Endothelial cell of umbilical vein (primary cell): ENCODE measurements at regions of chr12 and their contacts with region 1.

Region 1: DNA sequence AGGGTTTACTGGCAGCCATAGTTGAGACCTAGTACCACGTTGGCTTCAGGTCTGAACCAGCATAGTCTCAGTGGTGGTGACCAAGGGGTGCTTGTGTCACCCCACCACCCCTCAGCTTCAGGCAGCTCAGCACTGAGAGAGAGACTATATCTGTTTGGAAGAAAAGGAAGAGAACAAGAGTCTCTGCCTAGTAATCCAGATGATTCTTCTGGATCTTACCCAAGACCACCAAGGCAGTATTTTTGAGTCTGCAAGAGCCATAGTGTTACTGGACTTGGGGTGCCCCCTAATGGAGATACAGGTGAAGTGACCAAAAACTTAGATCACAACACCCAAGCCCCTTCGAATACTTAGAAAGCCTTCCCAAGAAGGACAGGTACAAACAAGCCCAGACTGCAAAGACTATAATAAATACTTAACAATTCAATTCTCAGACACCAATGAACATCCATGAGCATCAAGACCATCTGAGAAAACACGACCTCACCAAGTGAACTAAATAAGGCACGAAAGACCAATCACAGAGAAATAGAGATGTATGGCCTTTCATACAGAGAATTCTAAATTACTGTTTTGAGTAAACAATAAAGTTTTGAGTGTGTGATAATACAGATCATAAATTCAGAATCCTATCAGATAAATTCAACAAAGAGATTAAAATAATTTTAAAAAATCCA is 107.0 kb downstream of the HELB start:
- DNase-seq: peak; percentile 69
- H3K4me3 ChIP-seq: no peak overlapping the region
- H3K27ac ChIP-seq: no peak overlapping the region
- H3K4me1 ChIP-seq: peaks cover 11% of the 10 kb centered on the region
- H3K27me3 ChIP-seq: no peaks in the 10 kb centered on the region
- CTCF ChIP-seq: peak; percentile 58 to 70
- POLR2A ChIP-seq: no peak

Region 2: DNA sequence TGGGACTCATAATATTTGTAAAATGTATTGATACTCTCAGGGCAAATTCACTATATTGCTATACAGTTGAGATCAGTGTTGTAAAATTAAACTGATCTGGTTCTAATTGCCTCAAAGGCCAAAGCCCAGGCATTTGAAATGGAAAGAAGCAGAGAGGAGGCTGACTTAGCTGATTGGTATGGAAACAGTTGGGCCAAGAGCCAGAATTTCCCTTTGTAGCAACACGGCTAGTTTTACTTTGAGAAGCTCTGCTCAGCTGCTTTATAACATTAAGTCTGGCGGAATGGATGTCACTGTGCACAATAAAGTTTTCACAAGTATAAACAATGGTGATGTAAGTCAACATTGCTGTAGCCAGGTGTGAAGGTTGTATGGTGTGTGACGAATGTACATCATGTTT is 944.4 kb before region 1 on chr12:
- CTCF ChIA-PET with region 1: no interaction called
- POLR2A ChIA-PET with region 1: interaction called, 10 read pairs
- dilution Hi-C with region 1: no loop called
- intact Hi-C with region 1: no loop called
- DNase-seq: peak; percentile 18
- H3K4me3 ChIP-seq: no peak overlapping the region
- H3K27ac ChIP-seq: no peak overlapping the region
- H3K4me1 ChIP-seq: no peaks in the 10 kb centered on the region
- H3K27me3 ChIP-seq: no peaks in the 10 kb centered on the region
- CTCF ChIP-seq: no peak
- POLR2A ChIP-seq: no peak

Region 3: DNA sequence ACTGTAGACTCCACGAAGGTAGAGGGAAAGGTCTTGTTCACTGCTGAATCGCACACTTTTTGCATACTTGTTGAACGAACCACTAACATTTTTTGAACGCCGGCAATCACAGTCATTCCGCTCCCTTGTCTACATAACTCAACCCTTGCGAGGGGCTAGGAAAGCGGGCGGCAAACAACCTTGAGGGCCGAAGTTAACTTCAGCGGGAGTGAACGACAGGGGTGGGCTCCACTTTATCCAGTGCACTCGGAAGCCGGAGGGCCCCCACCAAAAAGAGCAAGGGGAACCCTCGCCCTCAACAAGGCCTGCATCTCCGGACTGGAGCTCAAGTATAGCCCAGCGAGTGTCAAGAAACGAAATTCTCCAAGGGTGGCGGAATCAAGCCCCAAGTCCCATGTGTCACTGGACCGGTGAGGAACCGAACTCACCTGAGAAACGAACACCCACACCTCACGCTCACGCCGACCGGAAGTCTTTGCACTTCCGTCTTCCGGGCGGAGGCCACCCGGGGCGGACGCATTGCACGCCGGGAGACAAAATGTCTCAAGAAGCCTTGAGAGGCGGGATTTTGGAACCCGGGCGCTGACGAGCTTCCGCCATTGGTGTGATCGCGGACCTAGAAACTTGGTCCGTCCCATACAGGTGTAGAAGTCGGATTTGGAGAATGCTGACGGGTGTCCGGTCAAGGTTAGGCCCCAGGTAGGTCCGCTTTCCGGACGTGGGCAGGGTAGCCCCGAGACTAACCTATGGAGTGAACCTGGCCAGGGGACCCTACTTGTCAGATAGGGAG is 278.9 kb before region 1 on chr12 and contains the start of gene LLPH:
- CTCF ChIA-PET with region 1: no interaction called
- POLR2A ChIA-PET with region 1: no interaction called
- dilution Hi-C with region 1: no loop called
- intact Hi-C with region 1: loop called (anchors 5 kb)
- DNase-seq: peak; percentile 80
- H3K4me3 ChIP-seq: peak within 1 kb of the TSS; percentile 68 to 85 (median 82)
- H3K27ac ChIP-seq: peak within 1 kb of the TSS; percentile 67
- H3K4me1 ChIP-seq: peaks cover 16% of the 10 kb centered on the region
- H3K27me3 ChIP-seq: no peaks in the 10 kb centered on the region
- CTCF ChIP-seq: no peak
- POLR2A ChIP-seq: peak; percentile 82
- total RNA-seq, gene LLPH: 34.0 and 35.6 TPM in 2 replicates

Region 4: DNA sequence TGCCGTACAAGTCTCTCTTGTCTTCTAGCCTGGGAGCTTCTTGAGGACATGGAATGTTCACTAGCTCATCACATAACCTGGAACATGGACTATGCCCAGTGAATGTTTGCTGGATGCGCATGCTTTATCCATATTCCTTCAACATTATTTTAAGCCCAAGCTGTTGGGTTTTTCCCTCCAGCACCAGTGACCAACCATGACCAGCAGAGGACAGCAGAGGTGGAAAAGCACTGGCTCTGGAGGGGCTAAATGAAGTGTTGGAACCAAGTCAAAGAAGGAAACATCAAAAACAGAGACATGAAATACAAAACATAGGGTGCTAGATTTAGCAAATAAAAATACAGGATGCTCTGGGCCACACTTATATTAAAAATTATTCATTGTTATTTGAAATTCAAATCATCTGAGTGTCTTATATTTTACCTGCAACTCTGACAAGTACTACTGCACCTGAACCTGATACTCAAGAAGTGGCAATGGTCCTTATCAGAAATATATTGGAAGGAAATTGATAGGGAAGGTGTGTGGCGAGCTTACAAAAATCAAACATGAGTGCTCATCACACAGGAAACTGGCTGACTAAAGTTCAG is 130.1 kb before region 1 on chr12:
- CTCF ChIA-PET with region 1: interaction called, 21 read pairs
- POLR2A ChIA-PET with region 1: no interaction called
- dilution Hi-C with region 1: no loop called
- intact Hi-C with region 1: loop called (anchors 1 kb)
- DNase-seq: peak; percentile 48
- H3K4me3 ChIP-seq: no peak overlapping the region
- H3K27ac ChIP-seq: no peak overlapping the region
- H3K4me1 ChIP-seq: peaks cover 2% of the 10 kb centered on the region
- H3K27me3 ChIP-seq: no peaks in the 10 kb centered on the region
- CTCF ChIP-seq: peak; percentile 63 to 69
- POLR2A ChIP-seq: no peak

Region 5: GRCh38 chr12:66693901-66694675 is 284.8 kb after region 1 on chr12:
- CTCF ChIA-PET with region 1: interaction called, 3 read pairs
- POLR2A ChIA-PET with region 1: no interaction called
- dilution Hi-C with region 1: no loop called
- intact Hi-C with region 1: loop called (anchors 2 kb)
- DNase-seq: peak; percentile 69
- H3K4me3 ChIP-seq: no peak overlapping the region
- H3K27ac ChIP-seq: no peak overlapping the region
- H3K4me1 ChIP-seq: no peaks in the 10 kb centered on the region
- H3K27me3 ChIP-seq: peaks cover 0 to 14% of the 10 kb centered on the region in 2 experiments
- CTCF ChIP-seq: peak; percentile 33 to 44
- POLR2A ChIP-seq: no peak

Region 6: GRCh38 chr12:66786531-66787308 is 377.4 kb after region 1 on chr12:
- CTCF ChIA-PET with region 1: no interaction called
- POLR2A ChIA-PET with region 1: no interaction called
- dilution Hi-C with region 1: no loop called
- intact Hi-C with region 1: no loop called
- DNase-seq: no peak
- H3K4me3 ChIP-seq: no peak overlapping the region
- H3K27ac ChIP-seq: no peak overlapping the region
- H3K4me1 ChIP-seq: no peaks in the 10 kb centered on the region
- H3K27me3 ChIP-seq: no peaks in the 10 kb centered on the region
- CTCF ChIP-seq: no peak
- POLR2A ChIP-seq: no peak